Right lobe of liver (tissue), 6 donors: ENCODE measurements at regions of chr1 and their contacts with region 1.

Region 1: GRCh38 chr1:84122780-84123382 is 21.2 kb upstream of the PRKACB start:
- DNase-seq: peak in 2 of 3 donors; percentile 25 to 57
- ATAC-seq: peak; percentile 78 to 88 (median 86)
- H3K4me3 ChIP-seq: no peak overlapping the region
- H3K27ac ChIP-seq: no peak overlapping the region
- H3K4me1 ChIP-seq: no peaks in the 10 kb centered on the region
- H3K27me3 ChIP-seq: no peaks in the 10 kb centered on the region
- CTCF ChIP-seq: peak; percentile 63 to 78 (median 76)
- POLR2A ChIP-seq: no peak

Region 2: GRCh38 chr1:83931658-83932253 is 191.1 kb before region 1 on chr1:
- intact Hi-C with region 1: loop called in 1 of 2 experiments (anchors 10 kb)
- DNase-seq: no peak
- ATAC-seq: peak; percentile 62 to 86 (median 74)
- H3K4me3 ChIP-seq: no peak overlapping the region
- H3K27ac ChIP-seq: no peak overlapping the region
- H3K4me1 ChIP-seq: peaks cover 0 to 7% (median 0%) of the 10 kb centered on the region in 4 donors
- H3K27me3 ChIP-seq: no peaks in the 10 kb centered on the region
- CTCF ChIP-seq: peak; percentile 70 to 78 (median 74)
- POLR2A ChIP-seq: no peak

Region 3: DNA sequence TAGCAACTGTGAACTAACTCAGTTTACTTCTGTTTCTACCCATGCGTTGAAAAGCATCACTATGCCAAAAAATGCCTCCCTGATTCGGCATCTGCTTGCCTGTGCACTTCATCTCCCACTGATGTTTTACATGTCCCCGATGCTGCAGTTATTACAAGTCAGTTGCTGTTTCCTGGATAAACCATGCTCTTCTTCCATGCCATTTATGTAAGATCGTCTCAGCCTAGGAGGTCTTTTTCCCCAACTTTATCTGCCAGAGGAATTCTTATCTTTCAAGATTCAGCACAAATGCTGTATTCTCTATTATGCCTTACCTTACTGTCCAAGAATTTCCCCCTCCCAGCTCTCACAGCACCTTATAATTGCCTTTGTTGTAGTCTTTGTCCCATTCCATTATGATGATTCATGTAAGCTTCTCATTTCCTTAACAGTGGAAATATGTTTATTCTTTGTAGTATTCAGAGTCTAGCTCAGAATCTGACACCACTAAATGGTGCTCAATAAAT is 51.2 kb after region 1 on chr1:
- intact Hi-C with region 1: no loop called
- DNase-seq: no peak
- ATAC-seq: no peak
- H3K4me3 ChIP-seq: no peak overlapping the region
- H3K27ac ChIP-seq: no peak overlapping the region
- H3K4me1 ChIP-seq: no peaks in the 10 kb centered on the region
- H3K27me3 ChIP-seq: no peaks in the 10 kb centered on the region
- CTCF ChIP-seq: no peak
- POLR2A ChIP-seq: no peak